Heart right ventricle (tissue), 16 donors: ENCODE measurements at regions of chr6 and their contacts with region 1.

Region 1: GRCh38 chr6:136037876-136038460 is 186.5 kb downstream of the PDE7B start:
- DNase-seq: peak; percentile 25 to 47
- ATAC-seq: peak; percentile 39 to 79 (median 64)
- H3K4me3 ChIP-seq: peak overlapping the region; percentile 23 to 67 (median 55)
- H3K27ac ChIP-seq: peak overlapping the region; percentile 9 to 92 (median 86)
- H3K4me1 ChIP-seq: peaks cover 4 to 93% (median 70%) of the 10 kb centered on the region in 9 donors
- H3K27me3 ChIP-seq: no peaks in the 10 kb centered on the region
- CTCF ChIP-seq: peak in 7 of 9 donors; percentile 28 to 56 (median 36)

Region 2: DNA sequence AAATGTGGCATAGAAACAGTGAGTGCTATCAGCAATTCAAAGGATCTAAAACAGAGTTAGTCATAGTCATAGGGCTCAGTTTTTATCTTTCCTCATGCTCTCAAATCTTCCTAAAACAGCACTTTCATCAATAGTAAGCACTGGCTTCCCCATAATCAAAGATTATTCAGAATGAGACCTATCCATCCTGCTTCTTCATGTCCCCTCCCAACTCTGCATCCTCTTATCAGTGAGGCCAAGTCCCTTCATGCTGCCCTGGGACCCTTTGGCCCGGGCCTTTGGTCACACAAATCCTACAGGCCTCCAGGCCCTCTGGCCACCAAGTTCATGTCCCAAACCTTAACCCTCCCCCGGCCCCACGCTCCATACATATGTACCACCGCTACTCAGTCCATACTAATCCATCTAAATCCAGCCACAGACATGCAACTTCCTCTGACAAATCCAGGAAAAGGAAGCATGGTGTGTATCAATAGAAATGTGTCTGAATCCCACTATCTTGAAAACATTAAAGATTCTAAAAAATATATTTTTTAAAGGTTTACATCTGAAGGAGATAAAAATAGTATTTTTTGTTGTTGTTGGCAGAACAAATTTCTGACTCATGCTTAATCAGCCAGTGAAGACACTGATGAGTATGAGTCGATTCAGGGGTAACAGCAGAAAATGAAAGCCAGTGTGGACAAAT is 43.0 kb before region 1 on chr6:
- intact Hi-C with region 1: no loop called
- DNase-seq: peak in 1 of 2 donors; percentile 12
- ATAC-seq: peak in 2 of 8 donors; percentile 55 to 70
- H3K4me3 ChIP-seq: no peak overlapping the region
- H3K27ac ChIP-seq: peak overlapping the region in 2 of 10 donors; percentile 48 to 69
- H3K4me1 ChIP-seq: peaks cover 0 to 24% (median 0%) of the 10 kb centered on the region in 9 donors
- H3K27me3 ChIP-seq: no peaks in the 10 kb centered on the region
- CTCF ChIP-seq: no peak

Region 3: GRCh38 chr6:136103763-136104311 is 65.9 kb after region 1 on chr6:
- intact Hi-C with region 1: loop called in 4 of 10 experiments (anchors 5 kb)
- DNase-seq: peak; percentile 76 to 89
- ATAC-seq: peak; percentile 95 to 99 (median 97)
- H3K4me3 ChIP-seq: peak overlapping the region in 3 of 10 donors; percentile 7 to 14 (median 13)
- H3K27ac ChIP-seq: peak overlapping the region; percentile 54 to 92 (median 84)
- H3K4me1 ChIP-seq: peaks cover 25 to 81% (median 55%) of the 10 kb centered on the region in 9 donors
- H3K27me3 ChIP-seq: no peaks in the 10 kb centered on the region
- CTCF ChIP-seq: no peak

Region 4: GRCh38 chr6:136113736-136114173 is 75.8 kb after region 1 on chr6:
- intact Hi-C with region 1: loop called in 3 of 10 experiments (anchors 5 kb)
- DNase-seq: peak; percentile 33 to 79
- ATAC-seq: peak; percentile 91 to 97 (median 94)
- H3K4me3 ChIP-seq: peak overlapping the region in 1 of 10 donors; percentile 9
- H3K27ac ChIP-seq: peak overlapping the region; percentile 40 to 81 (median 74)
- H3K4me1 ChIP-seq: peaks cover 5 to 71% (median 48%) of the 10 kb centered on the region in 9 donors
- H3K27me3 ChIP-seq: no peaks in the 10 kb centered on the region
- CTCF ChIP-seq: no peak

Region 5: GRCh38 chr6:136158387-136158821 is 120.4 kb after region 1 on chr6:
- intact Hi-C with region 1: loop called in 3 of 10 experiments (anchors 5 to 10 kb)
- DNase-seq: peak; percentile 58 to 73
- ATAC-seq: peak; percentile 70 to 94 (median 90)
- H3K4me3 ChIP-seq: no peak overlapping the region
- H3K27ac ChIP-seq: peak overlapping the region in 9 of 10 donors; percentile 0 to 60 (median 31)
- H3K4me1 ChIP-seq: peaks cover 0 to 46% (median 18%) of the 10 kb centered on the region in 9 donors
- H3K27me3 ChIP-seq: no peaks in the 10 kb centered on the region
- CTCF ChIP-seq: peak in 6 of 9 donors; percentile 18 to 69 (median 39)